ENCODE measurements at regions of chr2 and their contacts with region 1.

Region 1: GRCh38 chr2:181715033-181715630 is 34.8 kb upstream of the NEUROD1 start:
- DNase-seq: peak; percentile 31 to 83 (median 71)
- ATAC-seq: peak; percentile 83
- H3K4me3 ChIP-seq: no peak overlapping the region
- H3K4me3 Mint-ChIP-seq: no peak overlapping the region
- H3K27ac ChIP-seq: no peak overlapping the region
- H3K27ac Mint-ChIP-seq: no peak overlapping the region
- H3K4me1 ChIP-seq: no peaks in the 10 kb centered on the region
- H3K4me1 Mint-ChIP-seq: no peaks in the 10 kb centered on the region
- H3K27me3 ChIP-seq: no peaks in the 10 kb centered on the region
- H3K27me3 Mint-ChIP-seq: peaks cover 2% of the 10 kb centered on the region
- CTCF ChIP-seq: peak; percentile 69

Region 2: GRCh38 chr2:180125245-180125962 is 1589.7 kb before region 1 on chr2:
- CTCF ChIA-PET with region 1: interaction called, 9 read pairs
- POLR2A ChIA-PET with region 1: no interaction called
- intact Hi-C with region 1: loop called (anchors 1 kb)
- DNase-seq: peak; percentile 3 to 72 (median 35)
- ATAC-seq: peak; percentile 75
- H3K4me3 ChIP-seq: no peak overlapping the region
- H3K4me3 Mint-ChIP-seq: no peak overlapping the region
- H3K27ac ChIP-seq: no peak overlapping the region
- H3K27ac Mint-ChIP-seq: no peak overlapping the region
- H3K4me1 ChIP-seq: no peaks in the 10 kb centered on the region
- H3K4me1 Mint-ChIP-seq: peaks cover 2% of the 10 kb centered on the region
- H3K27me3 ChIP-seq: no peaks in the 10 kb centered on the region
- H3K27me3 Mint-ChIP-seq: peaks cover 11% of the 10 kb centered on the region
- CTCF ChIP-seq: no peak

Region 3: DNA sequence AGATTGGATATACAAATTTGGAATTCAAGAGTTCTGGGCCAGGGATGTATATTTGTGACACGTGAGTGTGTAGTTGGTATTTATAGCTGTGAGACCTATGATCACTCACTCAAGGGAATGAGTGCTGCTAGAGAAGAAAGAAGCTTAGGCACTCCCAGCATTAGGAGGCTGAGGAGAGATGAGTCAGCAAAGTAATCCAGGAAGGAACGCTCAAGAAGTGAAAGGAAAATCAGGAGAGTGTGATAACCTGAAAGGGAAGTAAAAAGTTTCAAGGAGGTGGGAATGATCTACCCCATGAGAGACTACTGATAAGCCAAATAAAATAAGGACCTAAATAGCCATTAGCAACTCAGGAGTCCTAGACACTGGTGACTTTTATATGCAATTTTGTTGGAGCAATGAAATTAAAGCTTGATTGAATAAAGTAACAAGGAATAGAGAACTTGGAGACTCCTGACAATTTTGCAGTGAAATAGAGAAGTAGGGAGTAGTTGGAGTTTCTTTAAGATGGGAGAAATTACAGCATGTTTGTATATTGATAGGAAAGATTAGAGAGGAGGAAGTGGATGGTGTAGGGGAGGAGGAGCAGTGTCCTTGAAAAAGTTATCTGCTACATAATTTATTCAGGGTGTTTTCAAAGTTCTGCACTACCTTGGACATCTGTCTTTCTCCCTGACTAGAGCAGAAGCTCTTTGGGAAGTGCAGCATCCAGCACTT is 644.9 kb before region 1 on chr2:
- CTCF ChIA-PET with region 1: interaction called, 22 read pairs
- POLR2A ChIA-PET with region 1: no interaction called
- intact Hi-C with region 1: no loop called
- DNase-seq: no peak
- ATAC-seq: no peak
- H3K4me3 ChIP-seq: no peak overlapping the region
- H3K4me3 Mint-ChIP-seq: no peak overlapping the region
- H3K27ac ChIP-seq: no peak overlapping the region
- H3K27ac Mint-ChIP-seq: no peak overlapping the region
- H3K4me1 ChIP-seq: no peaks in the 10 kb centered on the region
- H3K4me1 Mint-ChIP-seq: no peaks in the 10 kb centered on the region
- H3K27me3 ChIP-seq: no peaks in the 10 kb centered on the region
- H3K27me3 Mint-ChIP-seq: no peaks in the 10 kb centered on the region
- CTCF ChIP-seq: no peak

Region 4: GRCh38 chr2:181077128-181077709 is 637.9 kb before region 1 on chr2:
- CTCF ChIA-PET with region 1: interaction called, 22 read pairs
- POLR2A ChIA-PET with region 1: interaction called, 3 read pairs
- intact Hi-C with region 1: loop called (anchors 1 kb)
- DNase-seq: peak in 3 of 9 experiments; percentile 8 to 82 (median 76)
- ATAC-seq: peak; percentile 94
- H3K4me3 ChIP-seq: no peak overlapping the region
- H3K4me3 Mint-ChIP-seq: no peak overlapping the region
- H3K27ac ChIP-seq: no peak overlapping the region
- H3K27ac Mint-ChIP-seq: no peak overlapping the region
- H3K4me1 ChIP-seq: no peaks in the 10 kb centered on the region
- H3K4me1 Mint-ChIP-seq: no peaks in the 10 kb centered on the region
- H3K27me3 ChIP-seq: no peaks in the 10 kb centered on the region
- H3K27me3 Mint-ChIP-seq: no peaks in the 10 kb centered on the region
- CTCF ChIP-seq: peak; percentile 90

Region 5: GRCh38 chr2:181517685-181518301 is 197.3 kb before region 1 on chr2:
- CTCF ChIA-PET with region 1: interaction called, 10 read pairs
- POLR2A ChIA-PET with region 1: no interaction called
- intact Hi-C with region 1: no loop called
- DNase-seq: peak in 7 of 9 experiments; percentile 4 to 53 (median 21)
- ATAC-seq: peak; percentile 58
- H3K4me3 ChIP-seq: no peak overlapping the region
- H3K4me3 Mint-ChIP-seq: peak overlapping the region; percentile 2
- H3K27ac ChIP-seq: peak overlapping the region in 1 of 2 experiments; percentile 17
- H3K27ac Mint-ChIP-seq: peak overlapping the region; percentile 87
- H3K4me1 ChIP-seq: peaks cover 31% of the 10 kb centered on the region
- H3K4me1 Mint-ChIP-seq: peaks cover 51% of the 10 kb centered on the region
- H3K27me3 ChIP-seq: no peaks in the 10 kb centered on the region
- H3K27me3 Mint-ChIP-seq: no peaks in the 10 kb centered on the region
- CTCF ChIP-seq: no peak

Region 6: DNA sequence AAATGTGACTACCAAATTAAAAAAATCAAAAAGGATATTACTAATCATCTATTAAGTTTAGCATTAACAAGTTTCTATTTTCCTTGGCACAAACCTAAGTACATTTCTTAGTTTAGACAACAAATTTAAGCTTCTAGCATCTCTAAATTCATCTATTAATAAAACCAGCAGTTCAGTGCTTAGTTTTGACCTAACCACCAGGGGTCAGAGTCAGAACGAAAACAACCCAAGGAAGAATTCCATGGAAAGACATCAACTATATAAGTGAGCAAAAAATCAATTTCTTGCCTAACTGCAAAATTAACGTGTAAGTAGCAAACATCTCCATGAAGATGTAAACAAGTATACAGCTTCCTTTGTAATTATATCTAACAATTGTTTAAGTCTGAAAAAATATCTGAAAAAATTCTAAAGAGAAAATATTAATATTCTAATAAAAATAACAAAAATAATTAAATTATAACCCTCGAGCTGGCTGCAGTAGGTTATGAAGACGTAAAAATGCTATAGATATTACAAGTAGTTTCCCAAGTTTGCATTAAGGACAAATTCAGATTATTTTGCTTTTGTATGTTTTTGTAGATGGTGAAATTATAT is 141.9 kb before region 1 on chr2:
- CTCF ChIA-PET with region 1: interaction called, 16 read pairs
- POLR2A ChIA-PET with region 1: no interaction called
- intact Hi-C with region 1: loop called (anchors 1 to 2 kb)
- DNase-seq: peak in 2 of 9 experiments; percentile 11 to 28
- ATAC-seq: no peak
- H3K4me3 ChIP-seq: no peak overlapping the region
- H3K4me3 Mint-ChIP-seq: no peak overlapping the region
- H3K27ac ChIP-seq: no peak overlapping the region
- H3K27ac Mint-ChIP-seq: no peak overlapping the region
- H3K4me1 ChIP-seq: no peaks in the 10 kb centered on the region
- H3K4me1 Mint-ChIP-seq: no peaks in the 10 kb centered on the region
- H3K27me3 ChIP-seq: peaks cover 3% of the 10 kb centered on the region in 2 experiments
- H3K27me3 Mint-ChIP-seq: peaks cover 4% of the 10 kb centered on the region
- CTCF ChIP-seq: no peak

Measured in CD8-positive, alpha-beta T cell (primary cell).